MCF 10A (cell line): ENCODE measurements at regions of chr11 and their contacts with region 1.

Region 1: DNA sequence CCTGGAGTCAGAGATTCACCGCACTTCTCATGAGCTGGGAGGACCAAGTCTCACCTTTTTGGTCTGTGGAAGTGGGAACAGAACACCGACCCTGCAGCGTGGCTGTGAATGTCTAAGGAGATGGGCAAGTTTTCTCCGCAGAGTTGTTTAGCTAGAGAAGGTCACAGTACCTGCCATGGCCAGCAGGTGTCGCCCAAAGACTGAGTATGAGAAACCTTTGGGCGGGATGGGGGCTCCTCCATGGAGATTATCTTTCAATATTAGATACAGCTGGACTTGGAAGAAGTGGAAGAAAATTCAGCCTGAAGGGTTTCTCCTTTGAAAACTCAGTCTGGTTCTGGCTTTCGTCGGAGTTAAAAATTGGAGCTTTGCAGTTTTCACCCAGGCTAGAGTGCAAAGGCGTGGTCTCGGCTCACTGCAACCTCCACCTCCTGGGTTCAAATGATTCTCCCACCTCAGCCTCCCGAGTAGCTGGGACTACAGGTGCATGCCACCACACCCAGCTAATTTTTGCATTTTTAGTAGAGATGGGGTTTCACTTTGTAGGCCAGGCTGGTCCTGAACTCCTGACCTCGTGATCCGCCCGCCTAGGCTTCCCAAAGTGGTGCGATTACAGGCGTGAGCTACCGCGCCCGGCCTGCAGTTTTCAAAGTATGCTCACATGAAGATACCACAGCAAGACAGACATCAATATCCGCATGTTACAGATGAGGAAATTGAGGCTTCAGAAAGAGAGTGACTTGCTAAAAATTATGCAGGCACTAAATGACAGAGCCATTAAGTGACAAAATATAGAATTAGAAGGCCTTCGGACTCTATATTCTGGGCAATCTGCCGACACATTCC is 10.7 kb upstream of the DSCAML1 start:
- DNase-seq: peak; percentile 59
- H3K4me3 Mint-ChIP-seq: no peak overlapping the region
- H3K27ac Mint-ChIP-seq: no peak overlapping the region
- H3K4me1 Mint-ChIP-seq: no peaks in the 10 kb centered on the region
- H3K27me3 Mint-ChIP-seq: peaks cover 32% of the 10 kb centered on the region
- CTCF ChIP-seq: peak; percentile 87

Region 2: GRCh38 chr11:117431436-117431835 is 376.3 kb before region 1 on chr11:
- CTCF ChIA-PET with region 1: interaction called, 62 read pairs
- POLR2A ChIA-PET with region 1: no interaction called
- intact Hi-C with region 1: loop called (anchors 2 kb)
- DNase-seq: no peak
- H3K4me3 Mint-ChIP-seq: no peak overlapping the region
- H3K27ac Mint-ChIP-seq: no peak overlapping the region
- H3K4me1 Mint-ChIP-seq: no peaks in the 10 kb centered on the region
- H3K27me3 Mint-ChIP-seq: peaks cover 27% of the 10 kb centered on the region
- CTCF ChIP-seq: no peak

Region 3: GRCh38 chr11:117796872-117797529 is 10.7 kb before region 1 on chr11 and contains the start of gene DSCAML1:
- CTCF ChIA-PET with region 1: interaction called, 14 read pairs
- POLR2A ChIA-PET with region 1: no interaction called
- intact Hi-C with region 1: no loop called
- DNase-seq: no peak
- H3K4me3 Mint-ChIP-seq: no peak within 1 kb of the TSS
- H3K27ac Mint-ChIP-seq: no peak within 1 kb of the TSS
- H3K4me1 Mint-ChIP-seq: no peaks in the 10 kb centered on the region
- H3K27me3 Mint-ChIP-seq: peaks cover 70% of the 10 kb centered on the region
- CTCF ChIP-seq: no peak
- total RNA-seq, gene DSCAML1: not detected in 2 replicates

Region 4: DNA sequence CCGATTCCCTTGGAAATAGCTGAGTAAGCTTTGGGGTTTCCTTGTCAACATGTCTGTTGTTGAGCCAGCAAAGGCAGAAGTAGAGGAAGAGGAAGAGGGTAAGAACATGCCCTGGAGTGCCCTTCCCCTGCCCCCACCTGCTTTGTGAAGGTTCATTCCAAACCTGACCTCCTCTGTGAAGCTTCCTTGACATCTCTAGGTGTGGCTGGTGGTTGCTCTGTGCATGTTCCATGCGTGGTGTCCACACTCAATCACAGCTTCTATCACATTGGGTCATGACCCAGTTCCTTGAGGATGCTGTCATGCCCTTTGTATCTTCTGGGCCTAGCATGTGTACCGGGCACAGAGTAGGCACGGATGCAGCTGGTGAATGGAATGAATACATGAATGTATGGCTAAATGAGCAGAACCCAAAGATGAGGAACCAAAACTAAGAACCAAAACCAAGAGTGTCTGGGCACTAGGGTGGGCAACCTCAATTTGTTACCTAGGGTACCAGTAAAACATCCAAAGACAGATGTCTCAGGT is 92.5 kb after region 1 on chr11:
- CTCF ChIA-PET with region 1: no interaction called
- POLR2A ChIA-PET with region 1: no interaction called
- intact Hi-C with region 1: no loop called
- DNase-seq: no peak
- H3K4me3 Mint-ChIP-seq: no peak overlapping the region
- H3K27ac Mint-ChIP-seq: no peak overlapping the region
- H3K4me1 Mint-ChIP-seq: no peaks in the 10 kb centered on the region
- H3K27me3 Mint-ChIP-seq: peaks cover 20% of the 10 kb centered on the region
- CTCF ChIP-seq: no peak

Region 5: DNA sequence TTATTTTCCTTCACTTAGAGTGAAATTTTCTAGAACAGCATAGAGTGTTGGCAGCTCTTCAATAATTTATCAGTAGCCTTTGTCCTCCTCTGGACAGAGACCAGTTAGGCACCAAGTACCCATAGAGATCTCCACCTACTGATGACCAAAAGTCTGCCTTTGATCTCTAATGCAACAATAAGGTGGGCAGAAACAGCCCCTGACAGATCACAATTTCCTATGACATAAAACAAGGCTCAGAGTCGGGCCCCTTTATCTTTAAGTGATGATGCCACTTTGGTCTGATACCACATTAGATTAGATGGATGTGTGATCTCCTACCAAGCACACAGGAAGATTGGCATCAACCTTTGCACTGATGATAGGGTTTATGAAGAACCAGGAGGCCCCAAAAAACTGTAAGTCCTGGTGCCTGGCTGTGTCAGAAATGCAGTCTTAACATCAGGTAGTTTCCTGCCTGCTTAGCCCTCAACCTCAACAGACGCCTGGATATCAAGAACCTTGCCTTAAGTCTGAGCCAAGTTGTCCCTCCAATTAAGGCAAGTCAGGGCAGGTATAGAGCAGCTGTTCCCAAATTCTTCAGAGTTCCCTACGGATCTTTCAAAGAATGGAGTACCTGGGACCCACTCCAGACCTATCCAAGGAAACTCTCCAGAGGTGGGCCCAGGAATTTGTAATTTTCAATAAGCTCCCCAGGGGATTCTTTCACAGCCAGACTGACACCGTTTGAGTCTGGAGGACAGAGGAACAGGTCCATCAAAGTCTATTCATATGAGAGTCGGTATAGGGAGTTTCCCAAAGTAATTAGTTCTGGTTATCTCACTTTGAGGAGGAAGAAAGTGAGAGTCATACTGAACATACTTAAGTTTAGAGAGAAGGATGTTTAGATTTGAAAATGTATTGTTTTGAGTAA is 238.6 kb after region 1 on chr11:
- CTCF ChIA-PET with region 1: interaction called, 11 read pairs
- POLR2A ChIA-PET with region 1: no interaction called
- intact Hi-C with region 1: no loop called
- DNase-seq: no peak
- H3K4me3 Mint-ChIP-seq: no peak overlapping the region
- H3K27ac Mint-ChIP-seq: no peak overlapping the region
- H3K4me1 Mint-ChIP-seq: peaks cover 11% of the 10 kb centered on the region
- H3K27me3 Mint-ChIP-seq: peaks cover 62% of the 10 kb centered on the region
- CTCF ChIP-seq: no peak